Activated naive CD8-positive, alpha-beta T cell treated with anti-CD3 and anti-CD28 coated beads, Interleukin-2, amount 10 ng/mL, durations not matched to agents 7 days and 5 days (primary cell): ENCODE measurements at regions of chr3 and their contacts with region 1.

Region 1: DNA sequence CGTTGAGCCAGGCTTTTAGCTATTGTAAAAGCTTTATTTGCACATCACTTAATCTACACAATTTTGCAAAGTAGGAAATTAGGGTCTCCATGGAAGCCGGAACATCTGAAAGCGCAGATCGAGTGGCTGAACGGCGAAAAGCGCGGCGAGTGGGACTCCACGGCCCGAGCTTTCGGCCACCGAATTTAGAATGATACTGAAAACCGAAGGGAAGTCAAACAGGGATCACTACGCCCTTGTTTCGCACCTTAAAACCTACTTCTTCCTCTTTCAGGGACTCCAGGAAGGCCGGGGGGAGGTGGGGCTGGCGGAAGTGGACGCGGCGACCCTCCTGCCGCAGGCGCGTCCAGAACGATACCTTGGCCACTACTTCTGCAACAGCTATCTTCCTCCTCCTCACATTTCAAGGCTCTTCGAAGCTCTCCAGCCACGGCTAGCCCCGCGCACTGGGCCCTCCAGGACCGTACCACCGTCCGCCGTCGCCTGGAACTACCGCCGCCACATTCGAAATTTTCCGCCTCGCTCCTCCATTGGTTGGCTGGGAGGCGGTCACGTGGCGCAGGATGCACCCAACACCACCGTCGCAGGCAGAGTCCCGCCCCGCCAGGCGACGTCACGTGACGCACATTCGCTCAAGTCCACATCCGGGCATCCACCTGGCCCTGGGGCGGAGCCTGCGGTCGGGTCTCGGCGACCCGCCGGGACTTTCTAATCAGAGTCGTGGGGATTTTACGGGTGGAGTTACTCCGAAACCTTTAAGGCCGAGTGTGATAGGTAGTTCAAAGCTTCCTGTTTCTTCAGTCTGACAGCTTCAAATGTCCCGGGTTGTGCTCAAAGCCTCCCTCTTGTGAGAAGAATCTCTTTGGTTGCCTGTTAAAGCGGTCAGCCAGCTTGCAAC is at the start of gene SGO1:
- DNase-seq: peak; percentile 100
- ATAC-seq: peak; percentile 92
- H3K4me3 Mint-ChIP-seq: no peak within 1 kb of the TSS
- H3K27ac Mint-ChIP-seq: no peak within 1 kb of the TSS
- H3K4me1 Mint-ChIP-seq: peaks cover 8% of the 10 kb centered on the region
- H3K27me3 Mint-ChIP-seq: no peaks in the 10 kb centered on the region
- total RNA-seq, gene SGO1: 28.8 to 34.5 TPM

Region 2: GRCh38 chr3:20039766-20040475 is 146.0 kb before region 1 on chr3 and contains the start of gene KAT2B:
- POLR2A ChIA-PET with region 1: interaction called, 44 read pairs
- DNase-seq: peak; percentile 87
- ATAC-seq: peak; percentile 64
- H3K4me3 Mint-ChIP-seq: peak within 1 kb of the TSS; percentile 96
- H3K27ac Mint-ChIP-seq: peak within 1 kb of the TSS; percentile 98
- H3K4me1 Mint-ChIP-seq: peaks cover 42% of the 10 kb centered on the region
- H3K27me3 Mint-ChIP-seq: no peaks in the 10 kb centered on the region
- total RNA-seq, gene KAT2B: 97.8 to 108 TPM

Region 3: GRCh38 chr3:20104167-20104661 is 81.7 kb before region 1 on chr3:
- POLR2A ChIA-PET with region 1: interaction called, 13 read pairs
- DNase-seq: no peak
- ATAC-seq: peak; percentile 85
- H3K4me3 Mint-ChIP-seq: peak overlapping the region; percentile 63
- H3K27ac Mint-ChIP-seq: peak overlapping the region; percentile 86
- H3K4me1 Mint-ChIP-seq: peaks cover 70% of the 10 kb centered on the region
- H3K27me3 Mint-ChIP-seq: no peaks in the 10 kb centered on the region

Region 4: DNA sequence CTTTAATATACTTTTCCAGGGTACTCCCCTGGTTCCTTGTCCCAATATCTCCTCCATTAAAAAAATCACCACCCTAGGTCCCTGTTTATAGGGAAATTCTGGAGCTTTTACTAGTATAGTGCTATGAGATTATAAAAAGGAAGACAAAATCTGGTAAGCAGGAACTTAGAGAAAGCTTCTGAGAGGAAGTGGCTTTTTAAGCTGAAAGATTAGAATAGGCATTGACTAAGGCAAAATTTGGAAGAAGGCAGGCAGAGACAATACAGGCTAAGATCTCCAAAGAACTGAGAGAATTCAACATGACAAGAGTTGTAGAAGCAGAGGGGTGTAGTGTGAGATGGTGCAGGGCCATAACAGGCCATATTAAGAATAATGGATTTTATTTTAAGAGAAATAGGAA is 25.7 kb before region 1 on chr3:
- POLR2A ChIA-PET with region 1: interaction called, 10 read pairs
- DNase-seq: no peak
- ATAC-seq: peak; percentile 69
- H3K4me3 Mint-ChIP-seq: peak overlapping the region; percentile 35
- H3K27ac Mint-ChIP-seq: peak overlapping the region; percentile 75
- H3K4me1 Mint-ChIP-seq: peaks cover 18% of the 10 kb centered on the region
- H3K27me3 Mint-ChIP-seq: no peaks in the 10 kb centered on the region

Region 5: DNA sequence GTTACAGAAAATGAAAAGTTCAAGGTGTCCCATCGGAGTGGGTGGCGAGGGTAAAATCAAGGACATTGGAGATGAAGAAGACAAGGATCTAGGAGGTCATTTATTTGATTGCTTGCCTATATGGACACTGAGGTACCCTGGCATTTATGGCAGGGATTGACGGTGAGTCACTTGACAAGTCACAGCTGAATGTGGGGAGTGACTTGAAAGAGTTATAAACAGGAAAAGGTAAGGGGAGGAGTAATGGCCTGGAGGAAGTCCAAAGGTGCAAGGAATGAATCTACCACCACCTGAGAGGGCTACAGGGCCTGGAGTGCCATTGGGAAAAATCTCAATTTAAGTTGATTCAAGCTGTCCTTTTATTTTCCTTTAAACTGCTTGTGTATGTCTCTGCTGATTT is 11.8 kb after region 1 on chr3:
- POLR2A ChIA-PET with region 1: no interaction called
- DNase-seq: no peak
- ATAC-seq: no peak
- H3K4me3 Mint-ChIP-seq: no peak overlapping the region
- H3K27ac Mint-ChIP-seq: no peak overlapping the region
- H3K4me1 Mint-ChIP-seq: peaks cover 12% of the 10 kb centered on the region
- H3K27me3 Mint-ChIP-seq: no peaks in the 10 kb centered on the region